MCF 10A (cell line): ENCODE measurements at regions of chr2 and their contacts with region 1.

Region 1: DNA sequence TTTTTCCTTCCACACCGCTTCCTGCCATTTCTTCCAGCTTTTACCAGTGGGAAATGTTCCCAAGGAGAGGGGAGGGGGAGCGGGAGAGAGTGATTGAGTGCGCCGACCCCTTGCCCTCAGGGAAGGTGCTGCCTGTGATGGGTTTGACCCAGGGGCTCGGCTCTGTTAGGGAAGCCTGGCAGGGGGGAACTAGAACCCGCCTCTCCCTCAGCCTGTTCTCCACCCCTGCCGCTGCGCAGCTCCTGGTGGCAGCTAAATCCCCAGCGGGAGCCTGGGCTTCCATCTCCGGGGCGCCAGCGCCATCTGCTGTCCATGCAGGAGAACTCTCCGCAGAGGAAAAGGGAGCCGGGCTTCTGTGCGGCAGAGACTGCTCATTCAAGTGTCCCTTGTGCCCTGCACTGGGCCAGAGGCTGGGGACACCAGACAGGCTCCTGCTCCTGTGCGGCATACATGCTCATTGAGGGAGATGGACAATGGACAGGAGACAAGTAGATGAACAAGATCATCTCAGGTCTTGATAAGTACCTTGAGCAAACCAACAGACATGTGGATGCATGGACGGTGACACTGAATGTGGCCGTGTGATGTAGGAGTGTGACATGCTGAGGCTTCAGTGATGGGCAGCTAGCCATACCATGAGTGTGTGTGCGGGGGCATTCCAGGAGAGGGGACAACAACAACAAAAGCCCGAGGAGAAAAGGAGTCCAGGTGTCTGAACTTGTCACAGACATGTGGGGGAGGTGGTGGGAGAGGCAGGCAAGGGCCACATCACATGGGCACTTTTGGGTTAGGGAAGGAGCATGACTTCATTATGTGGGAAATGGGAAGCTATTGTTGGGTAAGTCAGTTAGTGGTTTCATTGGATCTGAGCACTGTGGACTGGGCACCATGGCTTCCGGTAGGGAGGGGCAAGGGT is 13.3 kb downstream of the CHPF start:
- DNase-seq: peak; percentile 76
- H3K4me3 Mint-ChIP-seq: no peak overlapping the region
- H3K27ac Mint-ChIP-seq: no peak overlapping the region
- H3K4me1 Mint-ChIP-seq: no peaks in the 10 kb centered on the region
- H3K27me3 Mint-ChIP-seq: peaks cover 64% of the 10 kb centered on the region
- CTCF ChIP-seq: peak; percentile 97

Region 2: DNA sequence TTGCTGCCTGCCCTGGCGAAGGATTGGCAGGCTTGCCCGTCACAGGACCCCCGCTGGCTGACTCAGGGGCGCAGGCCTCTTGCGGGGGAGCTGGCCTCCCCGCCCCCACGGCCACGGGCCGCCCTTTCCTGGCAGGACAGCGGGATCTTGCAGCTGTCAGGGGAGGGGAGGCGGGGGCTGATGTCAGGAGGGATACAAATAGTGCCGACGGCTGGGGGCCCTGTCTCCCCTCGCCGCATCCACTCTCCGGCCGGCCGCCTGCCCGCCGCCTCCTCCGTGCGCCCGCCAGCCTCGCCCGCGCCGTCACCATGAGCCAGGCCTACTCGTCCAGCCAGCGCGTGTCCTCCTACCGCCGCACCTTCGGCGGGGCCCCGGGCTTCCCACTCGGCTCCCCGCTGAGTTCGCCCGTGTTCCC is 112.1 kb before region 1 on chr2 and contains the start of gene DES:
- CTCF ChIA-PET with region 1: interaction called, 15 read pairs
- POLR2A ChIA-PET with region 1: no interaction called
- intact Hi-C with region 1: no loop called
- DNase-seq: no peak
- H3K4me3 Mint-ChIP-seq: no peak within 1 kb of the TSS
- H3K27ac Mint-ChIP-seq: no peak within 1 kb of the TSS
- H3K4me1 Mint-ChIP-seq: no peaks in the 10 kb centered on the region
- H3K27me3 Mint-ChIP-seq: no peaks in the 10 kb centered on the region
- CTCF ChIP-seq: no peak
- total RNA-seq, gene DES: not detected in 2 replicates

Region 3: GRCh38 chr2:219452838-219453317 is 77.4 kb before region 1 on chr2:
- CTCF ChIA-PET with region 1: interaction called, 33 read pairs
- POLR2A ChIA-PET with region 1: interaction called, 3 read pairs
- intact Hi-C with region 1: no loop called
- DNase-seq: peak; percentile 99
- H3K4me3 Mint-ChIP-seq: peak overlapping the region; percentile 64
- H3K27ac Mint-ChIP-seq: peak overlapping the region; percentile 83
- H3K4me1 Mint-ChIP-seq: peaks cover 26% of the 10 kb centered on the region
- H3K27me3 Mint-ChIP-seq: no peaks in the 10 kb centered on the region
- CTCF ChIP-seq: no peak

Region 4: DNA sequence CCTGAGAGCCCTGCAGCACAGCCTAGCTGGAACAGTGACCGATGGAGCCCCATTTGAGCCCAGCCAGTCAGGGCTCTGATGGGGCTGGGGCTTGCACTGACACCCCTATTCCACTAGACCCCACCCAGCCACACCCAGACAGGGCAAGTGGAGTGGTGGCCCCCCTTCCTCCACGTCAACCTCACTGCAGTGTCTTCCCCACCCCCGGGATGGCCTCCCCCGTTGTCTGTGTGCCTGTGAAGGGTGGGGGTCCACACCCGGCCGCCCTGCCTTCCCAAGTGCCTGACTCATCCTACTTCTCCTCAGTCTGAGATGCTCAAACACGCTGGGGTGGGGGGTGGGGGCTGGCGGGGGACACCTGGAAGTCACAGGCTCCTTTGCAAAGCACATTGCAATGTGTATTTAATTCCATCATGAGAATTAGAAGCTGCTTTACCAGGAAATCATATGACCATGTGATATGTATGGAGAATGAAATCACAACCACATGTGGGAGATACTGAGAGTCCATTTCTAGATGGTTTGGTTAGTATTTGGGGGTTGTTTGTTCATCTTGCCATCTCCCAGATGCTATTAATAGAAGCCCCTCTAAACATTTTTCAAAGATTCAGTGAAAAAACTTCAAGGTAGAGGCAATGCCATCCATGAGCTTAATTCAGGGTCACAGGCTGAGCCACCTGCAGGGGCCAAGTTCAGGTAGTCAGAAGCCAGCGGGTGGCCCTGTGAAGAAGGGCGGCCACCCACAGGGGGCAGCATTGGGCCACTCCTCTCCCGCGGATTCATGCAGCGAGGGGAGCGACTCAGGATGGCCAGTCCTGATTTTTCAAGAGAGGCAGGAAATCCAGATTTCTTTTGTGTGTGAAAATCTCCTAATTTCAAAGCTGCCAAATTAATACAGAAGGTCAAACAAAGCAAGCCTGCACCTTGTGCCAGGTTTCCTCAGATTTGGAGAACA is 54.3 kb before region 1 on chr2:
- CTCF ChIA-PET with region 1: interaction called, 30 read pairs
- POLR2A ChIA-PET with region 1: no interaction called
- intact Hi-C with region 1: loop called (anchors 1 kb)
- DNase-seq: peak; percentile 67
- H3K4me3 Mint-ChIP-seq: no peak overlapping the region
- H3K27ac Mint-ChIP-seq: no peak overlapping the region
- H3K4me1 Mint-ChIP-seq: no peaks in the 10 kb centered on the region
- H3K27me3 Mint-ChIP-seq: no peaks in the 10 kb centered on the region
- CTCF ChIP-seq: peak; percentile 70

Region 5: GRCh38 chr2:219543601-219544358 is 13.5 kb after region 1 on chr2 and contains the starts of genes CHPF and TMEM198:
- CTCF ChIA-PET with region 1: interaction called, 39 read pairs
- POLR2A ChIA-PET with region 1: interaction called, 3 read pairs
- intact Hi-C with region 1: no loop called
- DNase-seq: peak; percentile 98
- H3K4me3 Mint-ChIP-seq: peak within 1 kb of the TSS; percentile 75
- H3K27ac Mint-ChIP-seq: peak within 1 kb of the TSS; percentile 57
- H3K4me1 Mint-ChIP-seq: peaks cover 12% of the 10 kb centered on the region
- H3K27me3 Mint-ChIP-seq: no peaks in the 10 kb centered on the region
- CTCF ChIP-seq: no peak
- total RNA-seq, gene CHPF: 81.2 and 105 TPM in 2 replicates
- total RNA-seq, gene TMEM198: 5.3 and 6.3 TPM in 2 replicates

Region 6: DNA sequence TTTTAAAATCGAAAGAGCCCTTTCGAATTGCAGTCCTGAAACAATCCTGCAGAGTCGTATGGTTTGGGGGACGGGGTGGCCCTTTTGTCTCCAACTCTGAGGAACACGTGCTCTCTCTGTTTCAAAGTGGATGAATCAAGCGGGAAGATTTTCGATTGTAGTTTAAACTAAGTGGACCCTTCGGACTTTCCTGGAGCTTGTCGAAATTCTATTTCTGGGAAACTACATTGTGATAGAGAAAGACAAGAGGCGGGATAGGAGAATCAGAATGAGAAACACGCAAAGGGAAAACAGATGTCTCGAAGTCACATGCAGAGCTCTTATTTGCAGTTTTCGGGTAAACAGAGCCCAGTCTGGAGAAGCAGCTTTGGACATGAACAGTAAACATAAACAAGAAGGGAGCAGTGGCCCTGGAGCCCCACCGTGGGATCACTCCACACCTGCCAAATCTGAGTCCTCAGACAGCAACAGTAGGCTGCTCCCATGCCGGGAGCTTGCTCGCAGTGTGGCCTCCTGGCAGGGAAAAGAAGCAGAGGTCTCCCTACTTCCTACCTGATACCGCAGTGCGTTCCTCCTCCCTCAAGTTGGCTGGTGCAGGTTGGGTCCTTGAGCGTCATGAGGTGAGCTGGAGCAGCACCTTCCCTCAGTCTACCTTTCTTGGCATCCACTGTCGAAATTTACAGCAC is 299.5 kb after region 1 on chr2:
- CTCF ChIA-PET with region 1: no interaction called
- POLR2A ChIA-PET with region 1: no interaction called
- intact Hi-C with region 1: no loop called
- DNase-seq: no peak
- H3K4me3 Mint-ChIP-seq: no peak overlapping the region
- H3K27ac Mint-ChIP-seq: no peak overlapping the region
- H3K4me1 Mint-ChIP-seq: no peaks in the 10 kb centered on the region
- H3K27me3 Mint-ChIP-seq: no peaks in the 10 kb centered on the region
- CTCF ChIP-seq: no peak

Region 7: GRCh38 chr2:219997341-219997851 is 467.1 kb after region 1 on chr2:
- CTCF ChIA-PET with region 1: no interaction called
- POLR2A ChIA-PET with region 1: no interaction called
- intact Hi-C with region 1: no loop called
- DNase-seq: peak; percentile 45
- H3K4me3 Mint-ChIP-seq: no peak overlapping the region
- H3K27ac Mint-ChIP-seq: no peak overlapping the region
- H3K4me1 Mint-ChIP-seq: peaks cover 20% of the 10 kb centered on the region
- H3K27me3 Mint-ChIP-seq: no peaks in the 10 kb centered on the region
- CTCF ChIP-seq: peak; percentile 58